ENCODE measurements at regions of chr1 and their contacts with region 1.

Region 1: DNA sequence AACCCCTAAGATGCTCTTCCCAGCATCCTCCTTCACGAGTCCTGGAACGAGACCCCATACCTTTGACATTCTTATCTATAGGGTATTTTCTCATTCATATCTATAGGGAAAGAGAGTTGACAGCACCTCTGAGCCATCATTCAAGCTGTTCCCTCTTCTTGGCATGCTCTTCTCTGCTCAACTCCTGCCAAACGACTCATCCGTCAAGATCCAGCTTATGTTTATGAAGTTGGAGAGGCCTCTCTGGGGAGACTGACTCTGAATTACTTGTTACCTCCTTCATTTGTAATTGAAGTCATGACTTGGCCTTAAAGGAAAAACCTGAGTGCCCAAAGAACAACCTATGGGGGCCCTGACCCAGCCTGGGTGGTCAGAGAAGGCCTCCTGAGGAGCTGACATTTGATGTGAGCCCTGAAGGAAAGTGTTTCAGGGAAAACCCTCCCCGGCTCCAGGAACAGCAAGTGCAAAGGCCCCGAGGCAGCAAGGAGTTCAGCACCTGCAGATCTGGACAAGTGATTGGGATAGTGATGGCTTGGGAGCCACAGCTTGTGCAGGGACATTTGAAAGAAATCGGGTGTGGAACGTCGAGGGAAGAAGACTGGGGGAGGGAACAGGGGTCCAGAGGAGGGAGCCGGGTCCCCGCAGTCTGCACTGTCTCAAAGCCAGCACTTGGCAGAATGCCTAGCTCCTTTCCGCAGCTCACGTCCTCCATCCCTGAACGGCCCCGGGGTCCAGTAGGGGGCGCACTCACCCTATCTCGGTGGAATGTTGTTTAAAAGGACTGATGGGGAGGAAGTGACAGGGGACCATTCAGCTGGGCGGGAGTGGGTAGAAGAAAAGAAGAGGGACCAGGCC is 14.0 kb upstream of the CDA start:
- DNase-seq: peak; percentile 90
- ATAC-seq: peak; percentile 98
- H3K4me3 Mint-ChIP-seq: no peak overlapping the region
- H3K27ac Mint-ChIP-seq: no peak overlapping the region
- H3K4me1 Mint-ChIP-seq: no peaks in the 10 kb centered on the region
- H3K27me3 Mint-ChIP-seq: peaks cover 38% of the 10 kb centered on the region
- CTCF ChIP-seq: peak; percentile 76

Region 2: GRCh38 chr1:20405893-20406604 is 168.9 kb before region 1 on chr1:
- CTCF ChIA-PET with region 1: no interaction called
- POLR2A ChIA-PET with region 1: no interaction called
- DNase-seq: no peak
- ATAC-seq: peak; percentile 52
- H3K4me3 Mint-ChIP-seq: no peak overlapping the region
- H3K27ac Mint-ChIP-seq: no peak overlapping the region
- H3K4me1 Mint-ChIP-seq: peaks cover 13% of the 10 kb centered on the region
- H3K27me3 Mint-ChIP-seq: peaks cover 100% of the 10 kb centered on the region
- CTCF ChIP-seq: no peak

Region 3: GRCh38 chr1:20540281-20540680 is 34.6 kb before region 1 on chr1:
- CTCF ChIA-PET with region 1: interaction called, 10 read pairs
- POLR2A ChIA-PET with region 1: no interaction called
- DNase-seq: no peak
- ATAC-seq: no peak
- H3K4me3 Mint-ChIP-seq: no peak overlapping the region
- H3K27ac Mint-ChIP-seq: no peak overlapping the region
- H3K4me1 Mint-ChIP-seq: no peaks in the 10 kb centered on the region
- H3K27me3 Mint-ChIP-seq: peaks cover 30% of the 10 kb centered on the region
- CTCF ChIP-seq: no peak

Region 4: GRCh38 chr1:20594746-20595145 is 19.8 kb after region 1 on chr1:
- CTCF ChIA-PET with region 1: interaction called, 41 read pairs
- POLR2A ChIA-PET with region 1: no interaction called
- DNase-seq: no peak
- ATAC-seq: no peak
- H3K4me3 Mint-ChIP-seq: no peak overlapping the region
- H3K27ac Mint-ChIP-seq: no peak overlapping the region
- H3K4me1 Mint-ChIP-seq: peaks cover 18% of the 10 kb centered on the region
- H3K27me3 Mint-ChIP-seq: no peaks in the 10 kb centered on the region; the same call in 1 of the 2 replicates
- CTCF ChIP-seq: no peak

Region 5: DNA sequence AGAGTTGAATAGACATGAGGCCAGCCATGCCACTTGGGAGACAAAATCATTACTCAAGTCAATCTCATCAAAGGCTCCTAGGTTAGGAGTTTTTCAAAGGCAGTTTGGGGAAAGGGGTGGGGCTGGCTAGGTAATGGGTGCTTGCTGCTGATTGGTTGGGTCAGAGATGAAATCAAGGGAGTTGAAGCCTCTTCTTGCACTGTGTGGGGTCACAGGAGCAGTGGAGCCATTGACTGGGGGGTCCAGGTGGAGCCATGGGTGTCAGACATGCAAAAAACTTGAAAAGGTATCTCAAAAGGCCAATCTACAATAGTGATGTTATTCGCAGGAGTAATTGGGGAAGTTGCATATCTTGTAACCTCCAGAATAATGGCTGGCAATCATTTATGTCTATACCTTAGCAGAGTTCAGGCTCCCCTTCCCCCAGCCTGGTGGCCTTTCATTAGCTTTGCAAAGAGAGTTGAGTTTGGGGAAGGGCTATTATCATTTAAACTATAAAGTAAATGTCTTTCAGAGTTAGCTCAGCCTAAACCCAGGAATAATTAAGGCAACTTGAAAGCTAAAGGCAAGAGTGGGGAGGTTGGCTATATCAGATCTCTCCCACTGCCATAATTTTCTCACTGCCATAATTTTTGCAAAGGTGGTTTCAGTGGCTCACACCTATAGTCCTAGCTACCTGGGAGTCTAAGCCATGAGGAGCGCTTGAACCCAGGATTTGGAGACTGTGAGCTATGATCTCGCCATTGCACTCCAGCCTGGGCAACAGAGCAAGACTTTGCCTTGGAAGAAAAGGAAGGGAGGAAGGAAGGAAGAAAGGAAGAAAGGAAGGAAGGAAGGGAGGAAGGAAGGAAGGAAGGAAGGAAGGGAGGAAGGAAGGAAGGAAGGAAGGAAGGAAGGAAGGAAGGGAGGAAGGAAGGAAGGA is 50.5 kb after region 1 on chr1:
- CTCF ChIA-PET with region 1: interaction called, 13 read pairs
- POLR2A ChIA-PET with region 1: no interaction called
- DNase-seq: peak; percentile 40
- ATAC-seq: peak; percentile 91
- H3K4me3 Mint-ChIP-seq: peak overlapping the region; percentile 59
- H3K27ac Mint-ChIP-seq: peak overlapping the region; percentile 99
- H3K4me1 Mint-ChIP-seq: peaks cover 41% of the 10 kb centered on the region
- H3K27me3 Mint-ChIP-seq: peaks cover 6% of the 10 kb centered on the region; the same call in 1 of the 2 replicates
- CTCF ChIP-seq: no peak

Region 6: DNA sequence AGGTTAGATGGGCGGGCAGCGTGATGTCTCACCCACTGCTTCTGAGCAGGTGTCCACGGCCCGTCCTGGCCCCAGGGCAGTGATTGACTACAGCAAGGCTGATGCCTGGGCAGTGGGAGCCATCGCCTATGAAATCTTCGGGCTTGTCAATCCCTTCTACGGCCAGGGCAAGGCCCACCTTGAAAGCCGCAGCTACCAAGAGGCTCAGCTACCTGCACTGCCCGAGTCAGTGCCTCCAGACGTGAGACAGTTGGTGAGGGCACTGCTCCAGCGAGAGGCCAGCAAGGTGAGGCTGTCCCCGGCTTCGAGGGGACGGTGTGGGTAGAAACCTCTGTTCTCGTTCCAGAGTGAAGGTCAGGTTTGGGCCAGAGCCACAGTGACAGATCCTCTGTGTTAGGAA is 74.0 kb after region 1 on chr1:
- CTCF ChIA-PET with region 1: interaction called, 10 read pairs
- POLR2A ChIA-PET with region 1: no interaction called
- DNase-seq: no peak
- ATAC-seq: no peak
- H3K4me3 Mint-ChIP-seq: no peak overlapping the region
- H3K27ac Mint-ChIP-seq: peak overlapping the region; percentile 63; the same call in 1 of the 2 replicates
- H3K4me1 Mint-ChIP-seq: no peaks in the 10 kb centered on the region
- H3K27me3 Mint-ChIP-seq: no peaks in the 10 kb centered on the region
- CTCF ChIP-seq: no peak

Measured in WTC11 (cell line).